ENCODE measurements at regions of chr7 and their contacts with region 1.

Region 1: GRCh38 chr7:75662579-75663301 is 76.0 kb downstream of the HIP1 start:
- DNase-seq: peak; percentile 91
- H3K4me3 ChIP-seq: peak overlapping the region; percentile 58
- H3K27ac ChIP-seq: peak overlapping the region; percentile 95
- H3K4me1 ChIP-seq: peaks cover 44% of the 10 kb centered on the region
- CTCF ChIP-seq: no peak

Region 2: DNA sequence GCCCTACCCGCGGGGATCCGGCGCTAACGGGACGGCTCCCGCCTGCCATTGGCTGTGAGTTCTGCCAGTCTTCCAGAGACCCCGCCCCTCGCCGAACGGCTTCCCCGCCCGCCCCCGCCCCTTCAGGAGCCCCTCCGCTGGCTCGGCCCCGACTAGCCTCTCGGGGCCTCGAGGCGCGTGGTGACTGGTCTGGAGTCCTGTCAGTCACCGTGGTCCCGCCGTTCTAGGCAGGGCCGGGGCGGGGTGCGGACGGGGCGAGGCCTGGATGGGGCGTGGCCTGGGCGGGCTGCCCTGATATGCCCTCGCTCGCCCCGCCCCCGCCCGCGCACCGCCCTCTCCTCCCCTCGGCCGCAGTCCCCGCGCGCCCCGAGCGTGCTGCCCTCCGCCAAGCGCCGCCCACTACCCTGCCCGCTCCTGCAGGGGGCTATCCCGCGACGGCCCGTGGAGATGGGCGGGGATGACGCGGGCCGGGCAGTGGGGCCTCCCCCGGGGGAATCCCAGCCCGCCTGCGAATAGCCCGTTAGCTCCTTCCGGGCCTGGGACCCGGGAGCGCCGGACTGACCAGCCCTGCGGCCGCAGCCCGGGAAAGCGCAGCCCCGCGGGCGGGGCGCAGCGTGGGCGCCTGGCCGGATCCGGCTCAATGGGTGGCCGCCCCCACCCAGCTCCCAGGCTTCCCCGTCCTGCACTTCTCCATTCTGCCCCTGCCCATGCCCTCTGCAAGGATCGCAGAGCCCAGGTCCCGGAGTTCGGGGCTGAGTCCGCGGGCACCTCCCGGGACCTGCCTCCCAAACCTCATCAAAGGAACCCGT is 76.5 kb after region 1 on chr7:
- CTCF ChIA-PET with region 1: no interaction called
- POLR2A ChIA-PET with region 1: interaction called, 7 read pairs
- intact Hi-C with region 1: loop called (anchors 2 kb)
- DNase-seq: peak; percentile 99
- H3K4me3 ChIP-seq: peak overlapping the region; percentile 82
- H3K27ac ChIP-seq: peak overlapping the region; percentile 90
- H3K4me1 ChIP-seq: peaks cover 63% of the 10 kb centered on the region
- CTCF ChIP-seq: no peak

Measured in OCI-LY7 (cell line).